Endothelial cell of umbilical vein (primary cell): ENCODE measurements at regions of chr19 and their contacts with region 1.

Region 1: GRCh38 chr19:11197264-11198174 is at the start of gene KANK2:
- DNase-seq: peak; percentile 71
- H3K4me3 ChIP-seq: peak within 1 kb of the TSS; percentile 52 to 87 (median 69)
- H3K27ac ChIP-seq: peak within 1 kb of the TSS; percentile 71
- H3K4me1 ChIP-seq: peaks cover 19% of the 10 kb centered on the region
- H3K27me3 ChIP-seq: no peaks in the 10 kb centered on the region
- CTCF ChIP-seq: no peak
- POLR2A ChIP-seq: peak; percentile 84
- total RNA-seq, gene KANK2: 77.9 and 78.0 TPM in 2 replicates

Region 2: GRCh38 chr19:11164879-11165406 is 32.6 kb before region 1 on chr19:
- CTCF ChIA-PET with region 1: no interaction called
- POLR2A ChIA-PET with region 1: no interaction called
- dilution Hi-C with region 1: no loop called
- intact Hi-C with region 1: loop called (anchors 1 kb)
- DNase-seq: peak; percentile 51
- H3K4me3 ChIP-seq: no peak overlapping the region
- H3K27ac ChIP-seq: peak overlapping the region; percentile 35
- H3K4me1 ChIP-seq: peaks cover 31% of the 10 kb centered on the region
- H3K27me3 ChIP-seq: no peaks in the 10 kb centered on the region
- CTCF ChIP-seq: no peak
- POLR2A ChIP-seq: no peak

Region 3: DNA sequence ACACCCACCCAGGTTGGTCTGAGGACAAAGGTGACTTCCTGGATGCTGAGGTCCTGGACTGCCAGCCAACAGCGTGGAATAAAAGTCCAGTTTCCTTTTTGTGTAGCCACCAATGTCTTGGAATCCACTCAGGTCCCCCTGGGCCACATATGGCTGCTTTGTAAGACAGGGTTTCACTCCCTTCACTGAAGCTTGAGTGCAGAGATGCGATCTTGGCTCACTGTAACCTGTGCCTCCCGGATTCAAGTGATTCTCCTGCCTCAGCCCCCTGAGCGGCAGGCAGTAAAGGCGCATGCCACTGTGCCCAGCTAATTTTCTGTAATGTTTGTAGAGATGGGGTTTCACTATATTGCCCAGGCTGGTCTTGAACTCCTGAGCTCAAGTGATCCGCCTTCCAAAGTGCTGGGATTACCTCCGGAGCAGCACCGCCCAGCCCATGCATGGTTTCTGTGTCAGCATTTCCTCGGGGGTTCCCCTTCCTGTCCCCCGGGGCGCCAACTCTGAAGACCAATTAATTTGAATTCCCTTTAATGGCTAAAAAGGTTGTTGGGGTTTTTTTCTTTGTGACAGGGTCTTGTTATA is 17.7 kb before region 1 on chr19:
- CTCF ChIA-PET with region 1: interaction called, 3 read pairs
- POLR2A ChIA-PET with region 1: no interaction called
- dilution Hi-C with region 1: no loop called
- intact Hi-C with region 1: loop called (anchors 2 kb)
- DNase-seq: peak; percentile 28
- H3K4me3 ChIP-seq: no peak overlapping the region
- H3K27ac ChIP-seq: peak overlapping the region; percentile 53
- H3K4me1 ChIP-seq: peaks cover 12% of the 10 kb centered on the region
- H3K27me3 ChIP-seq: no peaks in the 10 kb centered on the region
- CTCF ChIP-seq: no peak
- POLR2A ChIP-seq: no peak

Region 4: GRCh38 chr19:11223214-11223613 is 25.7 kb after region 1 on chr19:
- CTCF ChIA-PET with region 1: no interaction called
- POLR2A ChIA-PET with region 1: no interaction called
- dilution Hi-C with region 1: no loop called
- intact Hi-C with region 1: no loop called
- DNase-seq: no peak
- H3K4me3 ChIP-seq: no peak overlapping the region
- H3K27ac ChIP-seq: no peak overlapping the region
- H3K4me1 ChIP-seq: no peaks in the 10 kb centered on the region
- H3K27me3 ChIP-seq: no peaks in the 10 kb centered on the region
- CTCF ChIP-seq: no peak
- POLR2A ChIP-seq: no peak

Region 5: DNA sequence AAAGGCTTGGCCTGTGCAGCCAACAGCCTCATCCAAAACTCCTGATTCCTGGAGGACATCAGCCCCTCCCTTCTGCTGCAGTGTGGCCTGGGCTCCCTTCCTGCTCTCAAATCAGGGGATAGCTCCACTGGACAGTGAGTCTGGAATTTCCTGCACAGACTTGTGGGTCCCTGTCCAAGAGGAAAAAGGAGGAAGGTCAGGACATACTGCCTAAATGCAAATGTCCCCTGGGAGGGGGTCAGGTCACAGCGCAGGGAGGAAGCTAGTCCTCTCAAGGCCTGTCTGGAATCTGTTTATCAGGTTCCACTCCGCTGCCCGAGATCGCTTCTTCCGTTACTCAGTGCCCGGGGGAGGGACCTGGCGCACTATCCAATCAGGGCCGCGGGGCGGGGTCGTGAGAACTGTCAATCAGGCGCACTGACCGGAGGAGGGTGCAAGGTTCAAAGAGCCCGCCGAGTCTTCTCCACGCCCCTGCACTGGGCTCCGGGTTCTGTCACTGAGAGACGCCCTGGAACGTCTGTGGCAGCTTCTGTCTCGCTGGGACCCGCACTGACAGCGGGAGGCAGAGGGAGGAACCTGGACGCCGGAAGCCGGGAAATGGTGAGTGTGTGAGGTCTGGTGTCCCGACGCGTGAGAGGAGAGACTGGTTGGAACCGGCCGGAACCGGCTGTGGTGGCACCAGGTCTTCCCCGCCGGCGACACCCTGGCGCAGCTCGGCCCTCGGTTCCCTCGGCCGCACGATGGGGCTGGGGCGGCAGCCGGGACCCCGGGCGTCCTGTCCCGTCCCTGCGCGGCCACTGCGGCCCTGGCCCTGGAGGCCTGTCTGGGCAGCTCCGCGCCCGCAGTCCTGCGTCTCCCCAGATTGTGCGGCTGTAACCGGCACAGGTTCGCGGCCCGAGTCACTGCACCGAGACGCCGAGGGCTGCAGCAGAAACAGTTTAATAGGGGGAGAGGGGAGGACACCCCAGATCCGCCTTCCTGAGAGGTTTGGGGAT is 569.4 kb after region 1 on chr19 and contains the start of gene ZNF441:
- CTCF ChIA-PET with region 1: no interaction called
- POLR2A ChIA-PET with region 1: no interaction called
- dilution Hi-C with region 1: no loop called
- intact Hi-C with region 1: no loop called
- DNase-seq: peak; percentile 95
- H3K4me3 ChIP-seq: peak within 1 kb of the TSS; percentile 46 to 88 (median 71)
- H3K27ac ChIP-seq: peak within 1 kb of the TSS; percentile 65
- H3K4me1 ChIP-seq: peaks cover 6% of the 10 kb centered on the region
- H3K27me3 ChIP-seq: no peaks in the 10 kb centered on the region
- CTCF ChIP-seq: no peak
- POLR2A ChIP-seq: peak; percentile 69
- total RNA-seq, gene ZNF441: 2.4 and 4.5 TPM in 2 replicates